Heart right ventricle (tissue), 16 donors: ENCODE measurements at regions of chr10 and their contacts with region 1.

Region 1: DNA sequence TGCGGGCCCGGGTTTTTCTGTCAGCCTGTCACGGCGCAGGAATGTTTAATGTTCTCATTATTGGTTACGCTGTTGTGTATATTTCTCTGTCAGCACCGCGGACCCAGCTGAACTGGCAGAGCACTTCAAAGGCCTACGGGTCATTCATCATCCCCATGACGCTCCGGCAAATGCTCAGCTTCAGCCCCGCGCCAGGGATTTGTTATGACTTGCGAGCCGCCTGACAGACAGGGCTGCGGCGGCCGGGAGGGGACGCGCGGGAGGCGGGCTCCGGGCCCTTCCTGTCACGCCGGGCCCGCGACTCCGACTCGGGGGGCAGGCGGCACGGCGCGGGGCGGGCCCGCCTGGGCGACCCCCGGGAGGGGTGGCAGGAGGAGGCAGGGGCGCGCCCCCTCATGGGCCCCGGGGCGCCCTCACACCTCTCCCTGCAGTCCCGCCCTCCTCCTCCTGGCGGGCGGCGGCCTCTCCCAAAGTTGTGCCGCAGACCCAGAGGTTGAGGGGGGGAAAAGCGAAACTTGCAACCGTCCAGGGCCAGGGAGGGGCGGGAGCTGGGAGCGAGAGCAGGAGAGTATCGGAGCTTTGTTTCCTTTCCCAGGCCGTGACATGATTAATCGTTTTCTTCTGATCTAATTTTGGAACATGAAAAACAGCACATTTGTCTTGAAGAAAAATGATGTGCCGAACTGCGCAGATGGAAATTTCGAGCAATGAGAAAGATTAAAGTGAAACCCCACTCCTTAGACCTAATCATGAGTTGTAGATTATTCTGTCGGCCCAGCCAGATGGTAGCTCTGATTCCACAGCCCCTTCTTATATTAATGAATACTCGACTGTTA is 59.3 kb upstream of the COMTD1 start:
- DNase-seq: peak; percentile 76 to 82
- ATAC-seq: peak; percentile 75 to 91 (median 85)
- H3K4me3 ChIP-seq: peak overlapping the region; percentile 37 to 72 (median 63)
- H3K27ac ChIP-seq: peak overlapping the region; percentile 85 to 96 (median 93)
- H3K4me1 ChIP-seq: peaks cover 3 to 27% (median 22%) of the 10 kb centered on the region in 9 donors
- H3K27me3 ChIP-seq: peaks cover 0 to 24% (median 0%) of the 10 kb centered on the region in 7 donors
- CTCF ChIP-seq: peak in 7 of 9 donors; percentile 16 to 56 (median 28)

Region 2: DNA sequence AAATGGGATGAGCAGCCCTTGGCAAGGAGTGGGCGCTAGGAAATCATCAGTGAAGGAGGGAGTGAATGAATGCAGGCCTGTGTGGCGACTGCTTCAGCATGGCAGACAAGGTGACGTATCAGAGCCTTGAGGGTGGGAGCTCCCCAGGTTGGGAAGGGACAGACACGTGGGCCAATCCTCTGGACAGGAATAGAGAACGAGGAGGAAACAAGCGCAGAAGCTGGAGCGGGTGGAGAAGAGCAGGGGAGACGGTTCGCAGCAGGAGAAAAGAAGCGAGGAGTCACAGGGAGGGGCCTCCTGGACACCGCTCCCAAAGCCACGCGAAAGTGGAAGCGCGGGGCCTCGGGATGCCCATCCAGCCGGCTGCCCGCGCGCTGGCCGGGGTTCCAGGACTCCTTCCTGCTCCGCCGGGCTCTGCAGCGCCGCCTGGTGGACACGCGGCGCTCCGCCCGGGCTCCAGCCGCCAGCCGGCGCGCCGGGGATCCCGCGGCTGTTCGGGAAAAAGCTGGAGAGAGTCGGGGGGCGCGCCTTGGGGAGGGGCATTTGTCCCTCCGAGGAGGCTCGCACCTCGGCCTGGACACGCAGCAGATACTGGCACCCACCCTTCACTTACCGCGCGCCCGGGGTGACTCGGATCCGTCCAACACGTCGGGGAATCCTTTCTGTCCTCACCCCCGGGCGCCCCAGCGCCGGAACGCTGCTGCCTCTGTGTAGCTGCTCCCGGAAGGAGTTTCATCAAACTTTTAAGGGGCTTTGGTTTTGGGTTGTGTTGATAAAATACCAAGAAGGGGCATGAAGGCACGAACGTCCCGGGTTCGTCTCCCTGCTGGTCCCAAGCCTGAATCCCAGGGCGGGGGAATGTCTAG is 100.2 kb after region 1 on chr10:
- intact Hi-C with region 1: loop called in 5 of 10 experiments (anchors 2 to 10 kb)
- DNase-seq: peak in 1 of 2 donors; percentile 71
- ATAC-seq: peak in 7 of 8 donors; percentile 33 to 58 (median 45)
- H3K4me3 ChIP-seq: peak overlapping the region; percentile 36 to 92 (median 86)
- H3K27ac ChIP-seq: peak overlapping the region; percentile 57 to 96 (median 78)
- H3K4me1 ChIP-seq: peaks cover 3 to 43% (median 20%) of the 10 kb centered on the region in 9 donors
- H3K27me3 ChIP-seq: peaks cover 0 to 39% (median 26%) of the 10 kb centered on the region in 7 donors
- CTCF ChIP-seq: peak; percentile 78 to 96 (median 91)

Region 3: GRCh38 chr10:75547391-75548298 is 252.6 kb after region 1 on chr10:
- intact Hi-C with region 1: no loop called
- DNase-seq: no peak
- ATAC-seq: peak in 2 of 8 donors; percentile 42 to 57
- H3K4me3 ChIP-seq: no peak overlapping the region
- H3K27ac ChIP-seq: peak overlapping the region in 4 of 10 donors; percentile 32 to 47 (median 36)
- H3K4me1 ChIP-seq: peaks cover 0 to 50% (median 28%) of the 10 kb centered on the region in 9 donors
- H3K27me3 ChIP-seq: no peaks in the 10 kb centered on the region
- CTCF ChIP-seq: no peak